Mammary epithelial cell (primary cell): ENCODE measurements at regions of chr14 and their contacts with region 1.

Region 1: GRCh38 chr14:99619835-99620834 is 16.1 kb upstream of the CCDC85C start:
- DNase-seq: no peak
- H3K4me3 ChIP-seq: no peak overlapping the region
- H3K27ac ChIP-seq: no peak overlapping the region
- H3K4me1 ChIP-seq: peaks cover 31% of the 10 kb centered on the region
- H3K27me3 ChIP-seq: no peaks in the 10 kb centered on the region
- CTCF ChIP-seq: no peak

Region 2: DNA sequence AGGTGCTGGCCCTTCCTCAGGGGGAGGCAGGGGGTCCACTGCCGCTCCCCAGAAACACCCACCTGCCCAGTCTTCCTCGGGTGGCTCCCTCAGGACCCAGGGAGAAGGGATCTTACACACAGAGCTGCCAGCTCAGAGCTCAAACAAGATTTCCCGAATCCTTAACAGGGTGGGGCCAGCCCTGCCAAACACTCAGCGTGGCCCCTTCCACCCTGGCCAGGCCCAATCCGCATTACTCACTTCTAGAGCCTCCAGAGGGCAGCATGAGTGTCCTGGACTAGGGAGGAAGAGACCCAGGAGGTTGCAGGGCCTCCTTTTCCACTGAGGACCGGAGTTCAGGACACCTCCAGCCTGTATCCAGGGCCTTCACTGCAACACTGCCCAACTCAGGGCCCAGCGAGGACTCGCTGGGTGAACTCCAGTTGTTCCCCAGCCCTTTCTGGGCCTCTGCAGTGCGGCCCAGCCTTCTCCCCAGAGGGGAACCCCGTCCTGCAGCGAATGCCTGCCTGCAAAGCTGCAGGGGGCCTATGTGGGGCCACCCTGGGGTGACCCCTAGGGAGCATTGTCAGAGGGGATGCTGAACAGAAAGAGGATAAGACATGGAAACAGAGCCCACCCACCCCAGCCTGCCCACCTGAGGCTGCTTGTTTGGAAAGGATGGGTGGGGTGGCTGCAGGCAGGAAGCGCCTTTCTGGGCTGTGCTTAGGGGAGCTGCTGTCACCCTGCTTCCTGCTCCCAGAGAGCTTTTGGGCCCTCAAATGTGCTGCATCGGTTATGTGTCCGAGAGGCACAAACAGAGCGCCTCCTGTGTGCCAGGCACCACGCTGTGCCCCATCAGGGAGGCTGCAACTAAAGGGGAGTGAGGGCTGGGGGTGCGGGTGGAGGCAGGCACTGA is 95.1 kb before region 1 on chr14:
- CTCF ChIA-PET with region 1: interaction called, 3 read pairs
- dilution Hi-C with region 1: no loop called
- in situ Hi-C with region 1: loop called in 1 of 2 experiments (anchors 5 kb)
- intact Hi-C with region 1: no loop called
- DNase-seq: no peak
- H3K4me3 ChIP-seq: no peak overlapping the region
- H3K27ac ChIP-seq: no peak overlapping the region
- H3K4me1 ChIP-seq: peaks cover 4% of the 10 kb centered on the region
- H3K27me3 ChIP-seq: no peaks in the 10 kb centered on the region
- CTCF ChIP-seq: peak in 1 of 2 donors; percentile 32

Region 3: DNA sequence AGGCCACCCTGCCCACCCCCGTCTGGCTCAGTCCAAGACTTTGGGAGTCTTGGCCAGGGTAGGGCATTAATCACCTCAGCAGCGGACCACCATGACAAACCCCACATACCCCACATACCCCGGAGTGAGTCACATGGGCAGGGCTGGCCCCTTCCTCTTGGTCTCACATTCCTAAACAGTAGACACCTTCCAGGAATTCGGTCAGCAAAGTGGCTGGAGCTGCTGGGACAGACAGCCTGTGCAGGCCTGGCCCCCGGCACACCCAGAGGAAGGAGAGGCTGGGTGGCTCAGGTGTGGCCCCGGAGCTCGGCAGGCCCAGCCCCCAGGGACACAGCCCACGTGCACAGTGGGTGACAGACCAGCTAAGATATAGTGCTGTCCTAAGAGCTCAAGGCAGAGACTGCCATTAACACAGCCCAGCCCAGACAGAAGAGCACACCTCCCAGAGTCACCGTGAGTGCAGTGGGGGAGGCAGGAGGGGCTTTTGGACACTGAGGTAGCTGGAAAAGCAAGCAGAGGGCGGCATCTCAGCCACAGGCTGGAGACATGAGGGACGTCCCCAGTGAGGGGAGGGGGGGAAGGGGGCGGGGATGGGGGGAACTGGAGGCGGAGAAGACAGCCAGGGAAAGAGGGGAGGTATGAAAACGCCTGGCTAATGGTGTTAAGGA is 40.1 kb before region 1 on chr14:
- CTCF ChIA-PET with region 1: no interaction called
- dilution Hi-C with region 1: no loop called
- in situ Hi-C with region 1: no loop called
- intact Hi-C with region 1: loop called (anchors 2 kb)
- DNase-seq: peak; percentile 63
- H3K4me3 ChIP-seq: peak overlapping the region in 2 of 3 experiments; percentile 12 to 26
- H3K27ac ChIP-seq: peak overlapping the region; percentile 85
- H3K4me1 ChIP-seq: peaks cover 53% of the 10 kb centered on the region
- H3K27me3 ChIP-seq: no peaks in the 10 kb centered on the region
- CTCF ChIP-seq: no peak

Region 4: DNA sequence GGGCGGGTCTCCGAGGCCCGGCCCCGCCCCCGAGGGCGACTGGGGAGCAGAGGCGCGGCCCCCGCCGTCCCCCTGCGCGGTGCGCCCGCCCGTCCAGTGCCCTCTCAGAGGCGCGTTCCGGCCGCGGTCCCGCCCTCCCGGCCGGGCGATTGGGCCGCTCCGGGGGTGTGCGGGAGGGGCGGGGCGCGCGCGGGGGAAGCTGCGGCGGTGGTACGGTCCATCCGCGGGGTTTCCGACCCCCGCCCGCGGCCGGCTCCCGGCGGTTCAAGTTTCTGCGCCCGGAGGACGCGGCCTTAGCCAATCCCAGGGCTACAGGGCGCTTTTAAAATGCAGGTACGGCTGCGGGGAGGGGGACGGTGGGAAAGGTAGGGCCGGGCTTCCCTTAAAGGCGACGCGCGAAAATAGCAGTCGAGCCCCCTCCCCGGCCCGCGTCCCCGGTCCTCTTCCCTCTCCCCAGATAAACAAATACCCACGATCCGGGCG is 15.8 kb before region 1 on chr14:
- CTCF ChIA-PET with region 1: no interaction called
- dilution Hi-C with region 1: no loop called
- in situ Hi-C with region 1: no loop called
- intact Hi-C with region 1: loop called (anchors 1 kb)
- DNase-seq: peak; percentile 95
- H3K4me3 ChIP-seq: peak overlapping the region; percentile 68 to 89 (median 71)
- H3K27ac ChIP-seq: peak overlapping the region; percentile 77
- H3K4me1 ChIP-seq: peaks cover 36% of the 10 kb centered on the region
- H3K27me3 ChIP-seq: no peaks in the 10 kb centered on the region
- CTCF ChIP-seq: no peak

Region 5: GRCh38 chr14:99609245-99610117 is 10.7 kb before region 1 on chr14:
- CTCF ChIA-PET with region 1: no interaction called
- dilution Hi-C with region 1: no loop called
- in situ Hi-C with region 1: no loop called
- intact Hi-C with region 1: loop called (anchors 1 kb)
- DNase-seq: no peak
- H3K4me3 ChIP-seq: no peak overlapping the region
- H3K27ac ChIP-seq: no peak overlapping the region
- H3K4me1 ChIP-seq: peaks cover 29% of the 10 kb centered on the region
- H3K27me3 ChIP-seq: no peaks in the 10 kb centered on the region
- CTCF ChIP-seq: no peak